ENCODE measurements at regions of chr5 and their contacts with region 1.

Region 1: GRCh38 chr5:97231025-97231636 is 48.1 kb upstream of the RIOK2 start:
- DNase-seq: peak; percentile 50
- H3K4me3 ChIP-seq: no peak overlapping the region
- H3K27ac ChIP-seq: no peak overlapping the region
- H3K27me3 ChIP-seq: no peaks in the 10 kb centered on the region
- CTCF ChIP-seq: peak; percentile 88

Region 2: GRCh38 chr5:96752341-96753016 is 478.7 kb before region 1 on chr5:
- CTCF ChIA-PET with region 1: no interaction called
- POLR2A ChIA-PET with region 1: no interaction called
- DNase-seq: peak; percentile 60
- H3K4me3 ChIP-seq: no peak overlapping the region
- H3K27ac ChIP-seq: no peak overlapping the region
- H3K27me3 ChIP-seq: no peaks in the 10 kb centered on the region
- CTCF ChIP-seq: peak; percentile 67

Region 3: GRCh38 chr5:97192580-97193358 is 38.4 kb before region 1 on chr5:
- CTCF ChIA-PET with region 1: interaction called, 10 read pairs
- POLR2A ChIA-PET with region 1: no interaction called
- DNase-seq: no peak
- H3K4me3 ChIP-seq: no peak overlapping the region
- H3K27ac ChIP-seq: no peak overlapping the region
- H3K27me3 ChIP-seq: no peaks in the 10 kb centered on the region
- CTCF ChIP-seq: no peak

Region 4: DNA sequence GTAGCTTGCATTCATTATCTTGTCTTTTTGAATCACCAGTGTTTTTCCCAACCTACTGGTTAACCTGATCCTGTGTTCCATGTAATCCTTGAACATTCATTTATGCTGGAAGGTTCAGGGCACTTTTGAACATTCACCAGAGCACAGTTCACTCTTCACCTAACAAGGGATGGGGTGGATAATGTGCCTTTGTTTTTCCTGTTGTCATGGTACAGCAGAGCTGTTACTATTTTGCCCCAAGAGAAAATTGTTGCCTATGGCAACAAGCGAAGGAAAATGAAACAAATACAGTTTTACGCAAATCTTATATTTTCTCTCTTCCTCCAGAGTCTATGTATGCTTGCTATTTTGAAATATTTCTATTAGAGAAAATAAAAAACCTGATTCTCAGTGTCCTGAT is 12.2 kb after region 1 on chr5:
- CTCF ChIA-PET with region 1: interaction called, 18 read pairs
- POLR2A ChIA-PET with region 1: no interaction called
- DNase-seq: no peak
- H3K4me3 ChIP-seq: no peak overlapping the region
- H3K27ac ChIP-seq: no peak overlapping the region
- H3K27me3 ChIP-seq: no peaks in the 10 kb centered on the region
- CTCF ChIP-seq: no peak

Region 5: DNA sequence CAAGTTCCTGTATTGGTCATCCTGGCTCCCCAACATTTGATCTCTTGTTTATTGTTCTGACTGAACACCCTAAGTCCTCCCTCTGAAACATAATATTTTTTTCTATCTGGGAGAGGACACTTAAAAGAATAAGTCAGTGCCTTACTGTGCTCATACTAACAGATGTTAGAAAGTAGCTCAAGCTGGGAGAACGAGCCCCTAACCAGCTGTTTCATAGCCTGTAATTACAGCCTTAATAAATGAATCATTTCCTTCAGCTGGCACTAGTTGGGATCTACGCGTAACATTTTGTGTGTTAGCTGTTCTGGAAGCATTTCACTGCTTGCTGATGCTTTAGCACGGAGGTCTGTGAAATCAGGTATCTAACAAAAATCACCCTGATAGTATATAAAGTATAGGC is 297.8 kb after region 1 on chr5:
- CTCF ChIA-PET with region 1: interaction called, 58 read pairs
- POLR2A ChIA-PET with region 1: no interaction called
- DNase-seq: peak; percentile 44
- H3K4me3 ChIP-seq: no peak overlapping the region
- H3K27ac ChIP-seq: no peak overlapping the region
- H3K27me3 ChIP-seq: no peaks in the 10 kb centered on the region
- CTCF ChIP-seq: no peak

Region 6: GRCh38 chr5:97534166-97534565 is 303.0 kb after region 1 on chr5:
- CTCF ChIA-PET with region 1: interaction called, 58 read pairs
- POLR2A ChIA-PET with region 1: no interaction called
- DNase-seq: peak; percentile 84
- H3K4me3 ChIP-seq: no peak overlapping the region
- H3K27ac ChIP-seq: no peak overlapping the region
- H3K27me3 ChIP-seq: no peaks in the 10 kb centered on the region
- CTCF ChIP-seq: peak; percentile 76

Region 7: GRCh38 chr5:98796197-98796972 is 1565.3 kb after region 1 on chr5:
- CTCF ChIA-PET with region 1: interaction called, 13 read pairs
- POLR2A ChIA-PET with region 1: no interaction called
- DNase-seq: no peak
- H3K4me3 ChIP-seq: no peak overlapping the region
- H3K27ac ChIP-seq: peak overlapping the region; percentile 21
- H3K27me3 ChIP-seq: no peaks in the 10 kb centered on the region
- CTCF ChIP-seq: peak; percentile 83